Activated CD4-positive, alpha-beta T cell treated with anti-CD3 and anti-CD28 coated beads for 36 hours (primary cell): ENCODE measurements at regions of chr15 and their contacts with region 1.

Region 1: DNA sequence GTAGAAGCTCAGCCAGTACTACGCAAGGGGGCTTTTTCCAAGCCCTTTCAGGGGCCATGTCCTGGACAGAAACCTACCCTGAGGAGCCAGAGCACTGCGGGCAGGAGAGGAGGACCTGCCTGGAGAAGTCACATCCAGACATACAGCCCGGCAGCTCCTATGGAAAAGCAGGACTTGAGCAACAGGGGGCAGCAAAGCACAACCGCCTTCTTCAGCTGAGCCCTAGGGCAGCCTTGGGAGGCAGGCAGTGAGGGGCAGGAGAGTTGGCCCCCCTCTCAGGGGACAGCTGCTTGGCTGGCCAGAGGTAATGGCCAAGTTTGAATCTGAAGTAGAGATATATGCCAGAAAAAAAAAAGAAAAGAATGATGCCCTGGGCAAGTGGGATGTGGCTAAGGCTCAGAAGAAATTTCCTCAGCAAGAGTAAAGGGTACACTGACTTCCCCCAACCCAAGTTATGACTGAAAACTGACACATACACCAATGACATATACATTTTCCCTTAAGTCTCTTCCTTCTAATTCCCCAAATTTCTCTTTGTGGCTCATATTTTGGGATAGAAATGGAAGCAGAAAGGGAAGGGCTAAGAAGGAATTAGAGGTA is 56.9 kb downstream of the CYP19A1 start:
- DNase-seq: peak; percentile 56
- ATAC-seq: no peak
- H3K4me3 Mint-ChIP-seq: no peak overlapping the region
- H3K27ac Mint-ChIP-seq: no peak overlapping the region
- H3K4me1 Mint-ChIP-seq: no peaks in the 10 kb centered on the region
- H3K27me3 Mint-ChIP-seq: peaks cover 10% of the 10 kb centered on the region

Region 2: DNA sequence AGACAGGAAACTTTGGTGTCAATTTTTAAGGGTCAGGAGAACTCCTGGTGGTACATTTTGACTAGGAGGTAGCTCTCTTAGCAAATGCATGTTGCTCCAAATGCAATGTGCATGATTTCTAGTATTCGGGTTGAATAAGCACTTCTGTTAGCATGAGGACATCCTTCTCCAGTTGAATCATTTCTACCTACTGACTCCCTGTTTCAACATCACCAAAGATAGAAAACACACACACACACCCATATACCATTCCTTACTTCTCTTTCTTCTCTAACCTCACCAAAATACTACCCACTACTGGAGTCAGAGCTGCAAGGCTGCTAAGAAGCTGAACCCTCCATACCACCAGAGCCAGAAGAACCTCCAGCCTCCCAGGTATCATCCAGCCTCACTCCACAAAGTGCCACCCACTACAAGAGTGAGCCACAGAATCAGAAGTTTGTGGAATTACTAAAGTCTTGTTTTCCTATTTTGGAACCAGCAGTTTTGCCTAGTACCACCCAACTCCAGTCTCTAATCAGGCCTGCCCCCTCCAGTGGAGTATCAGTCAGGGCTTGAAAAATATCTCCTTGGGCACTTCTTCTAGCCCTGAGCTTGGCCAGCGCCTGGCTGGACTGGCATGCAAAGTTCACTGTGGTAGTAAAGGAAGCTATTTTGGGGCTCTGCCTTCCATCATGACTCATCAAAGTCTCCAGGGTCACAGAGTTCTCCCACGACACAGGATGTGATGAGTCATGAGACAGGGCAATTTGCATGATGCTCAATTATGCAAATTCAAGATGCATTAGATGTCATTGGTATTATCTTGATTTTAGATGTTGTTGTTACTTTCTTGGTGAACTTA is 53.3 kb before region 1 on chr15:
- CTCF ChIA-PET with region 1: no interaction called
- POLR2A ChIA-PET with region 1: no interaction called
- intact Hi-C with region 1: loop called in 1 of 2 experiments (anchors 10 kb)
- DNase-seq: peak; percentile 51
- ATAC-seq: peak; percentile 85
- H3K4me3 Mint-ChIP-seq: no peak overlapping the region
- H3K27ac Mint-ChIP-seq: no peak overlapping the region
- H3K4me1 Mint-ChIP-seq: peaks cover 6% of the 10 kb centered on the region
- H3K27me3 Mint-ChIP-seq: peaks cover 9% of the 10 kb centered on the region

Region 3: DNA sequence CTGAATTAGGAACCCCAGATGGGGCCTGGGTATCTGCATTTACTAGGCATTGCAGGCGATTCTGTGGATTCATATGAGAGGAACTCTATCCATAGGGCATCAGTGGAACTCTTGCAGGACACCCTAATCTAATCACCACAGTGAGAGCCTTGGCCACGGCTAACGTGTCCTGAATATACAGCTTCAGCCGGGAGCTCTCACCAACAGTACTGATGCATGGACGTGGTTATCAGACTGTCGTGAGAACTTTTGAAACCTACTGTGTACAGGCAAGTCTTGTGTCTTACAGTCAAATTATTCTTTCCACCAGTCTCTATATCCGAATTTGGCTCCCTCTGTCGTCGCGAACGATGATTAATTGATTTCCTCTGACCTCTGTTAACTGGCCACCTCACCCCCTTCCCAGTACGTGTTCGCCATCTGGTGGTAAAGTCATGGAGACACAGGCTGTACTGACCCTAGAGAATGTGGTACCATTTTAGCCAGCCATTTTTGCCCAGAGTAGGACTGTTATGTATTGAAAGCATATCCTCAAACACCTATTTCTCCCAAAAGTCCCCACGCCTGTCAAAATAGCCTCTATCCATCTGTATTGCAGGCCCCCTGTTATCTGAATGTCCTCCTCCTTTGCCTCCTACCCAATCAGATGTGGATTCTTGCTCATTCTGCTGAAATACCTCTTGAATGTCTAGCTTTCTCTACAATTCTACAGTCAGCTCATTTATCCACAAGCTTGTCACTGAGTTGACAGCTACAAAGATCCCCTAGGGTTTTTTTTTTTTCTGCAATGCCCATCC is 99.7 kb after region 1 on chr15:
- CTCF ChIA-PET with region 1: interaction called, 3 read pairs
- POLR2A ChIA-PET with region 1: no interaction called
- intact Hi-C with region 1: loop called (anchors 1 to 2 kb)
- DNase-seq: peak; percentile 55
- ATAC-seq: peak; percentile 78
- H3K4me3 Mint-ChIP-seq: no peak overlapping the region
- H3K27ac Mint-ChIP-seq: no peak overlapping the region
- H3K4me1 Mint-ChIP-seq: no peaks in the 10 kb centered on the region
- H3K27me3 Mint-ChIP-seq: peaks cover 11% of the 10 kb centered on the region

Region 4: DNA sequence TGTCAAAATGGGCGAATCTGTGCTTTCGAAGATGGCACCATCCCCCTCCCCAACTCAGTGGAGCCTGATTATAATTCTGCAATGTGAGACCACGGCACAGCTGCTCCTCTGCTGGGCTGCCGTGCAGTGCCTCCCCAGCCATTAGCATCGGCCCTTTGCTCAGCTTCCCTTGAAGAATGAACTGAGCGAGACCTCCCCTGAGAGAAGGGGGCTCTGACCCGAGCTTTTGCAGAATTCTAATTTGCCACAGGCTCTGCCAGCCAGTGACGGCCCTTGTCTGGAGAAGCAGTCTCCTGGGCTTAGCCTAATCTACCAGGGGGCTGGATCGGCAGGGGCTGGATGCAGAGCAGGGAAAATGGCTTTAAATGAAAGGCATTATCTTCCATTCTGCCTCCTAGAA is 117.2 kb after region 1 on chr15:
- CTCF ChIA-PET with region 1: no interaction called
- POLR2A ChIA-PET with region 1: no interaction called
- intact Hi-C with region 1: no loop called
- DNase-seq: no peak
- ATAC-seq: no peak
- H3K4me3 Mint-ChIP-seq: no peak overlapping the region
- H3K27ac Mint-ChIP-seq: no peak overlapping the region
- H3K4me1 Mint-ChIP-seq: no peaks in the 10 kb centered on the region
- H3K27me3 Mint-ChIP-seq: peaks cover 12% of the 10 kb centered on the region

Region 5: GRCh38 chr15:51499379-51499976 is 218.0 kb after region 1 on chr15:
- CTCF ChIA-PET with region 1: interaction called, 3 read pairs
- POLR2A ChIA-PET with region 1: no interaction called
- intact Hi-C with region 1: loop called in 1 of 2 experiments (anchors 10 kb)
- DNase-seq: no peak
- ATAC-seq: no peak
- H3K4me3 Mint-ChIP-seq: no peak overlapping the region
- H3K27ac Mint-ChIP-seq: no peak overlapping the region
- H3K4me1 Mint-ChIP-seq: peaks cover 3% of the 10 kb centered on the region
- H3K27me3 Mint-ChIP-seq: no peaks in the 10 kb centered on the region